A549 (cell line): ENCODE measurements at regions of chr6 and their contacts with region 1.

Region 1: DNA sequence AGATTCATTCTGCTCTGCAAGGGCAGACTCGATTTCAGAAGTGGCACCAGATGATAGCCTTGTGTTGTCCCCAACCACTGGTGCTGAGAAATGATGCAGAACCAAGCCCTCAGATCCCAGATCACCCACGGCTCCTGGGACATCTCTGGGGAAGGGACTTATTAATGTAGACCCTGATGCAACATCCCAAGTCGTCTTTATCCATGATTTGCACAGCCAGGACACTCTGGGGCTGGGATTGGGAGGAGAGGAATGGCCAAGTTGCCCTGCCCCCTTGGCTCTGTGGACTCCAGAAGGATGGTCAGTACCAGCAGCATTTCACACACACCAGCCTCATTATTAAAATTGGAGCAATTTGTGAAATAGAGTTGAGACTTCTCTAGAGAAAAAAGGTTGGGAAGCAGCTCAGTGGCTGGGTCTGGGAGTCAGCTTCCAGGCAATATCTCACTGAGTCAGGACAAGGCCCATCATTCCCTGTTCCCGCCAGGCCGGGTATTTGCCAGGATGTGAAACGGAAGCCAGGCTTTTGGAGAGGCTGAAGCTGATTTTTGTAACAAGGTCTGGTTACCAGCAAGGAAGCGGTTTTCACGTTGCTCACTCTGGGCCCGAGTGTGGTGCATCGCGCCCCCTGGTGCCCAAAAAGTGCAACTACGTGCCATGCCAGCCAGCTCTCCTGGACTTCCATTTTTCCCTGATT is 67.4 kb downstream of the ZBTB2 start:
- DNase-seq: peak; percentile 20 to 84
- ATAC-seq: peak; percentile 72 to 85
- H3K4me3 ChIP-seq: no peak overlapping the region
- H3K27ac ChIP-seq: peak overlapping the region; percentile 83 to 84
- H3K4me1 ChIP-seq: peaks cover 30% of the 10 kb centered on the region
- CTCF ChIP-seq: peak; percentile 76
- EP300 ChIP-seq: no peak
- POLR2A ChIP-seq: no peak
- RAD21 ChIP-seq: peak; percentile 89 to 91

Region 2: DNA sequence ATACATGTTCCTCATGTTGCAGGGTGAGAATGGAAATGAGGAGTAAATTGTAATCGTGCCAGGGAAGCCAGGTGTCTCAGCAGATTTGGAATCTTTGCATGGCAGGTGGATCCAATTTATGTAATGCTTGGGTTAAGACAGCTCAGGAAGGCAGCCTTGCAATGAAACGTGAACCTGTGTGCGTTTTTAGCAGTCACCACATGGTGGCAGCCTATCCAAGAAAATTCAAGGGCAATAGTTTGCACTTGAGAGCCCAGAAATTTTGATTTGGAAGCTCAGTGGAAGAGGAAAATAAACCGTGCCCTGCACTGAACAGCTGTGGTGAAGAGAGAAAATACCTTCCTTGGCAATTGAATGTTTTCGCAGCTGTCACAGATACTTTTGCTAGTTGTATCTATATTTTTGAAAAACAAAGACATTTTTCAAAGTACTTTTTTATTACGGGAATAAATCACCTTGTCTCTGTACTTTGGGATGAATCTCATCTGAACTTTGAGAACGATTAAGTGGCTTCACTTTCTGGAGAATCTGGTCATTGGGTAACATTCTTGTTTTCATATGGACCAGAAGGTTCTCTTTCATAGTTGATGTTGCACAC is 432.0 kb before region 1 on chr6:
- CTCF ChIA-PET with region 1: interaction called, 90 read pairs
- POLR2A ChIA-PET with region 1: interaction called, 3 read pairs
- DNase-seq: peak; percentile 14 to 73
- ATAC-seq: peak; percentile 76 to 82
- H3K4me3 ChIP-seq: no peak overlapping the region
- H3K27ac ChIP-seq: peak overlapping the region; percentile 29 to 64; a peak in 4 of 6 replicates
- H3K4me1 ChIP-seq: peaks cover 17% of the 10 kb centered on the region
- CTCF ChIP-seq: peak; percentile 71
- EP300 ChIP-seq: no peak
- POLR2A ChIP-seq: no peak
- RAD21 ChIP-seq: peak; percentile 81

Region 3: DNA sequence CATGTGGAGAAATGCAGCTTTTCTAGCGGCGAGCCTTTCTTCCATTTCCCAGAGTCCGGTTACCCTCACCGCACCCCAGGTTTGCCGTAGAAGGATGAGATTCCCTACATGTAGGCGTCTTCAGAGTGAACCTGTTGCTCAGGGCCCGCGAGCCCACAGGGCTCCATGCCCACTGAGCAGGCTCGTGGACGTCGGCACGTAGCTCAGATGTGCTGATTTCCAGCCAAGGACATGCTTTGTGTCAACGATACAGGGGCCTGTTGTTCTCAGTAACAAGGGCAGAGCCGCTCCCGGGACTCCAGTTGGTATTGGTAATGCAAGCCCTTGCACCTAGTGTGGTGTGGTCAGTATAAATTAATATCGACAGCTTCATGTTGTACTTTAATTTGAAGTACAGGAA is 298.9 kb before region 1 on chr6:
- CTCF ChIA-PET with region 1: interaction called, 192 read pairs
- POLR2A ChIA-PET with region 1: no interaction called
- DNase-seq: no peak
- ATAC-seq: no peak
- H3K4me3 ChIP-seq: no peak overlapping the region
- H3K27ac ChIP-seq: peak overlapping the region; percentile 30 to 75; a peak in 3 of 6 replicates
- H3K4me1 ChIP-seq: peaks cover 43% of the 10 kb centered on the region
- CTCF ChIP-seq: no peak
- EP300 ChIP-seq: no peak
- POLR2A ChIP-seq: no peak
- RAD21 ChIP-seq: no peak

Region 4: GRCh38 chr6:151067684-151068596 is 256.0 kb before region 1 on chr6:
- CTCF ChIA-PET with region 1: interaction called, 43 read pairs
- POLR2A ChIA-PET with region 1: interaction called, 8 read pairs
- DNase-seq: peak; percentile 74 to 99
- ATAC-seq: peak; percentile 92 to 95
- H3K4me3 ChIP-seq: no peak overlapping the region
- H3K27ac ChIP-seq: peak overlapping the region; percentile 90 to 98
- H3K4me1 ChIP-seq: peaks cover 62% of the 10 kb centered on the region
- CTCF ChIP-seq: no peak
- EP300 ChIP-seq: peak; percentile 92 to 96; a peak in 4 of 5 replicates
- POLR2A ChIP-seq: no peak
- RAD21 ChIP-seq: peak; percentile 21 to 53; a peak in 4 of 5 replicates

Region 5: DNA sequence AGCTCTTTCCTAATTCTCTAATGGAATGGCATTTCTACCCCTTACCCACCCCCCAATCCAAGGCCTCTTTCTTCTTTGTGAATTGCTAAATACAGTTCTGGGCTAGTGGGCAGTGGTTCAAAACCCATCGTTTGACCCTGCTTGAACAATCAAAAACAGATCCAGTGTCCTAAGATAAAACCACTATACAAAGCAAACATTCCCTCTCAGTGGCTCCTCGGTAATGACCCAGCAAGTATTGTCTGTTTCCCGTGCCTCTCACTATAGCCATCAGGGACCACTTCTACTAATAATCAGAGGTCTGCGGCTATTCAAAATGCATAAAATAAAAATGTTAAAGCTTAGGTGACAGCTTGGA is 227.7 kb before region 1 on chr6:
- CTCF ChIA-PET with region 1: interaction called, 10 read pairs
- POLR2A ChIA-PET with region 1: interaction called, 3 read pairs
- DNase-seq: no peak
- ATAC-seq: no peak
- H3K4me3 ChIP-seq: no peak overlapping the region
- H3K27ac ChIP-seq: no peak overlapping the region
- H3K4me1 ChIP-seq: peaks cover 6% of the 10 kb centered on the region; the same call in 2 of the 3 replicates
- CTCF ChIP-seq: no peak
- EP300 ChIP-seq: no peak
- POLR2A ChIP-seq: no peak
- RAD21 ChIP-seq: no peak

Region 6: GRCh38 chr6:151313066-151313491 is 10.9 kb before region 1 on chr6:
- CTCF ChIA-PET with region 1: interaction called, 37 read pairs
- POLR2A ChIA-PET with region 1: no interaction called
- DNase-seq: no peak
- ATAC-seq: no peak
- H3K4me3 ChIP-seq: no peak overlapping the region
- H3K27ac ChIP-seq: no peak overlapping the region
- H3K4me1 ChIP-seq: peaks cover 10% of the 10 kb centered on the region; the same call in 2 of the 3 replicates
- CTCF ChIP-seq: no peak
- EP300 ChIP-seq: no peak
- POLR2A ChIP-seq: no peak
- RAD21 ChIP-seq: no peak

Region 7: GRCh38 chr6:151461673-151462072 is 137.7 kb after region 1 on chr6:
- CTCF ChIA-PET with region 1: no interaction called
- POLR2A ChIA-PET with region 1: no interaction called
- DNase-seq: no peak
- ATAC-seq: no peak
- H3K4me3 ChIP-seq: no peak overlapping the region
- H3K27ac ChIP-seq: no peak overlapping the region
- H3K4me1 ChIP-seq: no peaks in the 10 kb centered on the region
- CTCF ChIP-seq: no peak
- EP300 ChIP-seq: no peak
- POLR2A ChIP-seq: no peak
- RAD21 ChIP-seq: no peak